Heart left ventricle (tissue), 16 donors: ENCODE measurements at regions of chr15 and their contacts with region 1.

Region 1: GRCh38 chr15:58438956-58439355 is 7.2 kb downstream of the LIPC start:
- DNase-seq: peak in 4 of 5 donors; percentile 47 to 70 (median 66)
- ATAC-seq: peak; percentile 72 to 86 (median 76)
- H3K4me3 ChIP-seq: no peak overlapping the region
- H3K27ac ChIP-seq: peak overlapping the region in 10 of 12 donors; percentile 25 to 88 (median 85)
- H3K4me1 ChIP-seq: peaks cover 5 to 48% (median 37%) of the 10 kb centered on the region in 12 donors
- H3K27me3 ChIP-seq: no peaks in the 10 kb centered on the region
- CTCF ChIP-seq: peak in 9 of 12 donors; percentile 10 to 53 (median 34)
- POLR2A ChIP-seq: no peak

Region 2: DNA sequence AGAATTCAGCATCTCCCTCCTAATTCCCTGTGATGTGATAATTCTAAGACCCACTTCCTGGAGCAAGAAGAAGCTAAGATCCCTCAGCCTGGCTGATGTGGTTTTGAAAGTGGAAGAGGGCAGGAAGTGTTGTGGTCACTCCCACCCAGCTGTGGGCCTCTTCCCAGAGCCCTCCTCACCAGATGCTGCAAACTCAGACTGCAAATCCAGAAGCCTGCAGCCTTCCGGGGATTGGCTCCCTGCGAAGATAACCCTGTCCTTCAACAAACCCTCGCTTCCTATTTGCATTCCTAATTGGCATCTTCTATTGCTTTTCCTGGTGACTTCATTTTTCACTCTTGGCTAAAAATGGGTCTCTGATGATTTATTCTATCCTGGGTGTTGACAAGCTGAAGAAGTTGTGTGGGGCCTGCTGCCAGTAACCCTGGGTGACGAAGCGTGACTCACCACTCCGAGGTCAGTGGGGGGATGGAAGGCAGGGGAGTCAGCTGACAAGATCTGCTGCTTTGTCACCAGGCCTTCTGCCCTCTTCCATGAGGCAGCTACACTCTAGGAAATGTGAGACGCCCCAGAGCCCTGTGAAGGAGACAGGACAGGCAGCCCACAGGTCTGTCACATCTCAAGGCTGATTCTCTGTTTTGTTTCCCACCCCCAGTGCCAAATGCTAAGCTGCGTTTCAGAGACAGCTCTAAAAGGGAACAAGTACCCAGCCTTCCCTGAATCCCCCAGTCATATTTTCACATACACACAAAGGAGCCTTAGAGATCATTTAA is 106.9 kb before region 1 on chr15:
- intact Hi-C with region 1: loop called in 3 of 10 experiments (anchors 1 to 5 kb)
- DNase-seq: peak; percentile 94 to 98 (median 96)
- ATAC-seq: peak; percentile 96 to 98 (median 97)
- H3K4me3 ChIP-seq: peak overlapping the region in 2 of 12 donors; percentile 1 to 14
- H3K27ac ChIP-seq: peak overlapping the region; percentile 79 to 95 (median 90)
- H3K4me1 ChIP-seq: peaks cover 8 to 48% (median 31%) of the 10 kb centered on the region in 12 donors
- H3K27me3 ChIP-seq: no peaks in the 10 kb centered on the region
- CTCF ChIP-seq: no peak
- POLR2A ChIP-seq: peak in 1 of 2 donors; percentile 13

Region 3: DNA sequence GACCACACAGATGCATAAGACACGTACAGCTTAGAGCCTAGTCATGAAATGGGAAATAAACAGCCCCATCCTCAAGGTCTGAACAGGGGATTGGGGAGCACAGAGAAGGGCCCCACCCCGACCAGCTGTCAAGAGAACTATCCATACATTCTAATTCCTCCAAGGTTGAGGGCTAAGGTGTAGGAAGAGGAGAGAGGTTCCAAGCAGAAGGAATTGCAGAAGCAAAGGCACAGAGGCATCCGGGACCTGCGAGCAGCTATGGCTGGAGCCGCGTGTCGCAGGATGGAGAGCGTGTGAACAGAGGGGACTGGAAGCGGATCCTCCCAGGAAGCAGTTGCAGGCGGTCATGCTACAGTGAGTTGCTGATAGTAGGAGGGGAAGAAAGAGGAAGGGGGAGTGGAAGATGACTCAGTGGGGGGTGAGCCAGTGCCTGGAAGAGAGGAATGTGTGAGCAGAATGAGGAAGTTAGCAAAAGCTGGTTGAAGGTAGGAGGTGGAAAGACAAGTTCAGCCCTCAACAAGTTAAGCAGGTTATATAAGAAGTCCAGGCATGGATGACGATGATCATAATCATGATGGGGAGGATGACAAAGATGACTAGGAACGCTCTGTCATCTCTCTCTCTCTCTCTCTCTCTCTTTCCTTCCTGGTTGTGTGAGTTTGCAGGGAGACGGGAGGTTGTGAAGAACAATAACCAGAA is 82.5 kb after region 1 on chr15:
- intact Hi-C with region 1: loop called in 1 of 10 experiments (anchors 10 kb)
- DNase-seq: peak in 3 of 5 donors; percentile 44 to 78 (median 66)
- ATAC-seq: peak in 3 of 4 donors; percentile 31 to 55 (median 35)
- H3K4me3 ChIP-seq: peak overlapping the region in 1 of 12 donors; percentile 4
- H3K27ac ChIP-seq: peak overlapping the region in 6 of 12 donors; percentile 5 to 82 (median 19)
- H3K4me1 ChIP-seq: peaks cover 3 to 94% (median 33%) of the 10 kb centered on the region in 12 donors
- H3K27me3 ChIP-seq: no peaks in the 10 kb centered on the region
- CTCF ChIP-seq: no peak
- POLR2A ChIP-seq: no peak

Region 4: DNA sequence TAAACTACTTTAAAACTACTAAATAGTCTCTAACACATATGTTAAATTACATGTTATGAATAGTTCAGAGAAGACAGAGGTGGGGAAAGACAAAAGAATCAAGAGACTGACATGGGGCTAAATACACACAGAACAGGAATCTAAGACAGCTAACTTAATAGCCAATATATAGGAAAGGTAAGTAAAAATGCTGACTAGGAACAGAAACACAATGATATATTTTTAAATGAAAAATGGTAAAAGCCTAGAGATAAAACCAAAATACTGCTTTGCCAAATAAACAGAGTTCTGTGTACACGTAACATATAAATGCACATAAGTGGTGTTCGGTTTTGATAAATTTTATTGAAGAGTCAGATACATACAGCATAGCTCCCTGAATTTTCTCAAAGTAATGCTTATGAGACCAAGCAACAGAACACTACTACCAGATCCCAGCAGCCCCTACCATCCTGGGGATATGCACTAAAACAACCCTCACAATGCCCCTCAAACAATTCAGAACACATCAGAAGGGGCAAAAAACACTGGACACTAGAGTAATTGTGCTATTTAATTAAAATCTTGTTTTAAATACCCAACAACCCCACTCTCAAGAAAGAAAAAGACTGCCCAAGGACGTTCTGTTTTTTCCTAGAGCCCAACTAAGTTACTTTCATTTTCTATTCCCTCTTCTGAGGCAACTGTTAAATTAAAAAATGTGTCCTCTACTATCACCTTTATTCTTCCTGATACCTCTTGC is 189.4 kb after region 1 on chr15:
- intact Hi-C with region 1: loop called in 2 of 10 experiments (anchors 10 kb)
- DNase-seq: no peak
- ATAC-seq: peak in 2 of 4 donors; percentile 61 to 68
- H3K4me3 ChIP-seq: peak overlapping the region in 10 of 12 donors; percentile 5 to 49 (median 40)
- H3K27ac ChIP-seq: peak overlapping the region; percentile 6 to 89 (median 71)
- H3K4me1 ChIP-seq: peaks cover 0 to 37% (median 19%) of the 10 kb centered on the region in 12 donors
- H3K27me3 ChIP-seq: no peaks in the 10 kb centered on the region
- CTCF ChIP-seq: no peak
- POLR2A ChIP-seq: no peak